ENCODE measurements at regions of chr11 and their contacts with region 1.

Region 1: DNA sequence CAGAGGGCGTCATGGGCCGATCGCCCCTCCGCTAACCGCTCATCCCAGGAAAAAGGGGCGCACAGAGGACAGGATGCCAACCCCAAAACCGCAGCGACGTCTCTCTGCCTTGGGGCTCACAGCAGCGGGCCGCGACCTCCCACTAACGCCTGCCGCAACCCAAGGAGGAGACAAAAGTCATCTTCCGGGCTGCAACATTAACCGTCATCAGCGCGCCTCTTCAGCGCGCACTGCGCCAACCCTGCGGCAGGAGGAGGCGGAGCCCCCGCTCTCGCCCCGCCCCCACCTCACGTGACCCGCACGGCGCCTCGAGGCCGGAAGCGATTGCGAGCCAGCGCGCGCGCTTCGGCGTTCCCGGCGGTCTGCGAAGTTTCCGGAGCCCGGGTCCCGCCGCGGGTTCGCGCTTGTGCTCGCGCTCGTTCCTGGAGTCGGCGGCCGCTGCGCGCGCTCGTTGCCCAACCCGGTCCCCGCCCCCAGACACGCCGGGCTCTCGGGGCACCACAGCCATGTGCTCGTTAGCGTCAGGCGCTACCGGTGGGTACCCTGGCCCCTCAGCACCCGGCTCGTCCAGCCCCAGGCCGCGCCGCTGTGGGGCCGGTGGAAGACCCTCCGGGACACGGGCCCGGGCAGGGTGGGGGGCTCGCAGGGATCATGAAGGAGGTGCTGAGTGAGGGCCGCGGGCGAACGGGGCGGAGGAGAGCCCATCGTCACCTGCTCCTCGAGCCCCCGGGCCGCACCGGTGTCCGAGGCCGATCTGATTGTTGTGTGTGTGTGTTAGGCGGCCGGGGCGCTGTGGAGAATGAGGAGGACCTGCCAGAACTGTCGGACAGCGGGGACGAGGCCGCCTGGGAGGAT is at the start of gene PRMT3:
- DNase-seq: peak; percentile 96 to 99 (median 97)
- ATAC-seq: peak; percentile 86
- H3K4me3 ChIP-seq: peak within 1 kb of the TSS; percentile 85 to 86
- H3K4me3 Mint-ChIP-seq: peak within 1 kb of the TSS; percentile 96
- H3K27ac ChIP-seq: peak within 1 kb of the TSS; percentile 92 to 94
- H3K27ac Mint-ChIP-seq: peak within 1 kb of the TSS; percentile 99
- H3K4me1 ChIP-seq: peaks cover 17% of the 10 kb centered on the region
- H3K4me1 Mint-ChIP-seq: peaks cover 35% of the 10 kb centered on the region
- H3K27me3 ChIP-seq: no peaks in the 10 kb centered on the region
- H3K27me3 Mint-ChIP-seq: no peaks in the 10 kb centered on the region
- CTCF ChIP-seq: peak; percentile 86
- total RNA-seq, gene PRMT3: 10.2 to 10.6 TPM

Region 2: DNA sequence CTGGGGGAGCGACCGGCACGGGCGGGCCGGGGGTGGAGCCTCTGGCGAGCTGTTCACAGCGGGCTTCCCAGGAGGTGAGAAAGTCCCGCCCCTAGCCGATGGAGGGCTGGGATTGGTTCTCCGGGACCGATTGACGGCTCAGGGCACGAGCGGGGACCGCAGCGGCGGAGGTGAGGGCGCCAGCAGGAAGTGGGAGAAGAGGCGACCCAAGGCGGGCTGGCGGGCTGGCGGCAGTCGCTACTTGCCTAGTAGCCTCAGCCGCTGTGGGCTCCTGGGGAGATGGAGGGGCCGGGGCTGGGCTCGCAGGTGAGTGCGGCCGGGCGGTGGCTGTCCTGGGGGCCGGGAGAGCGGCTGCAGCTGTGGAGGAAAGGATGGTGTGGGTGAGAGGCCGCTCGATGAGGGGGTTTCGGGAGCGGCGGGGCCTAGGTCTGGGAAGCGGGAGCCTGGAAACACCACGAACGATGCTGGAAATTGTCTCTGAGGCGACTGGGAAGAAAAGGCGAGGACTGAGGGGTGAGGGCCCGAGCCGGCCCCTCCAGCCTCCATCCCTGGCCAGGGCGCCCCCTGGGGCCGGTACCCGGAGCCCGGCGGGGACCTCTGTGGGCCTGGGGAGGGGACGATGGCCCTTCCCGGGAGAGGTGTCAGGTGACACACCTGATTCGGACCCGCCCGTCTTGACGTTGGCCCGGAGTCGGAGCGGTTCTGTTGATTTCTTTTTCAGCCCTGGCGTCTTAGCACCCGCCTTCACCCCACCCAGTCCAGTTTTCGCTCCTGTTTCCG is 1270.3 kb before region 1 on chr11 and contains the start of gene ZDHHC13:
- CTCF ChIA-PET with region 1: no interaction called
- POLR2A ChIA-PET with region 1: no interaction called
- intact Hi-C with region 1: loop called (anchors 2 to 10 kb)
- DNase-seq: peak; percentile 85 to 96 (median 93)
- ATAC-seq: peak; percentile 98
- H3K4me3 ChIP-seq: peak within 1 kb of the TSS; percentile 73 to 84
- H3K4me3 Mint-ChIP-seq: peak within 1 kb of the TSS; percentile 93
- H3K27ac ChIP-seq: peak within 1 kb of the TSS; percentile 48 to 62
- H3K27ac Mint-ChIP-seq: peak within 1 kb of the TSS; percentile 87
- H3K4me1 ChIP-seq: peaks cover 26% of the 10 kb centered on the region
- H3K4me1 Mint-ChIP-seq: peaks cover 50% of the 10 kb centered on the region
- H3K27me3 ChIP-seq: no peaks in the 10 kb centered on the region
- H3K27me3 Mint-ChIP-seq: no peaks in the 10 kb centered on the region
- CTCF ChIP-seq: no peak
- total RNA-seq, gene ZDHHC13: 3.1 to 3.5 TPM

Region 3: GRCh38 chr11:19712281-19713220 is 674.9 kb before region 1 on chr11 and contains the start of gene NAV2:
- CTCF ChIA-PET with region 1: no interaction called
- POLR2A ChIA-PET with region 1: no interaction called
- intact Hi-C with region 1: loop called in 1 of 2 experiments (anchors 5 kb)
- DNase-seq: peak; percentile 43 to 88 (median 68)
- ATAC-seq: peak; percentile 97
- H3K4me3 ChIP-seq: peak within 1 kb of the TSS; percentile 67 to 86
- H3K4me3 Mint-ChIP-seq: peak within 1 kb of the TSS; percentile 90
- H3K27ac ChIP-seq: peak within 1 kb of the TSS; percentile 43 to 61
- H3K27ac Mint-ChIP-seq: peak within 1 kb of the TSS; percentile 90
- H3K4me1 ChIP-seq: peaks cover 20% of the 10 kb centered on the region
- H3K4me1 Mint-ChIP-seq: peaks cover 26% of the 10 kb centered on the region
- H3K27me3 ChIP-seq: peaks cover 15 to 19% of the 10 kb centered on the region in 2 experiments
- H3K27me3 Mint-ChIP-seq: peaks cover 33% of the 10 kb centered on the region
- CTCF ChIP-seq: no peak
- total RNA-seq, gene NAV2: 0.39 to 1.3 TPM

Region 4: GRCh38 chr11:20363500-20364411 is 23.7 kb before region 1 on chr11 and contains the start of gene HTATIP2:
- CTCF ChIA-PET with region 1: interaction called, 9 read pairs
- POLR2A ChIA-PET with region 1: interaction called, 6 read pairs
- intact Hi-C with region 1: loop called in 1 of 2 experiments (anchors 1 kb)
- DNase-seq: peak; percentile 52 to 88 (median 74)
- ATAC-seq: peak; percentile 86
- H3K4me3 ChIP-seq: peak within 1 kb of the TSS; percentile 79 to 82
- H3K4me3 Mint-ChIP-seq: peak within 1 kb of the TSS; percentile 92
- H3K27ac ChIP-seq: peak within 1 kb of the TSS; percentile 68 to 69
- H3K27ac Mint-ChIP-seq: peak within 1 kb of the TSS; percentile 94
- H3K4me1 ChIP-seq: peaks cover 33% of the 10 kb centered on the region
- H3K4me1 Mint-ChIP-seq: peaks cover 66% of the 10 kb centered on the region
- H3K27me3 ChIP-seq: no peaks in the 10 kb centered on the region
- H3K27me3 Mint-ChIP-seq: no peaks in the 10 kb centered on the region
- CTCF ChIP-seq: no peak
- total RNA-seq, gene HTATIP2: 6.6 to 7.5 TPM

Region 5: DNA sequence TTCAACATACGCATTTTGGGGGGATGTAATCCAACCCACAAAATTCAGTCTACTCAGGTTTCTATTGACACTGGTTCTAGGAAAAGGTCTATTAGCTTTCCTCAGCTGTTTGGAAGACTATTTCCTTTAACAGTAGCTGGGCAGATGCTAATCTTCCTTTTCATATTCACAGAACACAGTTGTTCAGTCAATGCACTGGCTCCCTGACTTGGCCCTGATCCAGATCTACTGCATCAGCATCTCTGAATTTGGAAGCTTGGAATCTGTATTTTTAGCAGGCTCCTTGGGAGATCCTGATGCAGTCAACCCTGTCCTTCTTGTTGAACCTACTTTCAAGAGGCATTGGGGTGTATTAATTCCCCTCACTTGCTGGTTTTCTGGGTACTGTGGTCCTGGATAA is 17.7 kb before region 1 on chr11:
- CTCF ChIA-PET with region 1: interaction called, 6 read pairs
- POLR2A ChIA-PET with region 1: no interaction called
- intact Hi-C with region 1: loop called in 1 of 2 experiments (anchors 2 kb)
- DNase-seq: no peak
- ATAC-seq: no peak
- H3K4me3 ChIP-seq: no peak overlapping the region
- H3K4me3 Mint-ChIP-seq: no peak overlapping the region
- H3K27ac ChIP-seq: no peak overlapping the region
- H3K27ac Mint-ChIP-seq: no peak overlapping the region
- H3K4me1 ChIP-seq: no peaks in the 10 kb centered on the region
- H3K4me1 Mint-ChIP-seq: peaks cover 28% of the 10 kb centered on the region
- H3K27me3 ChIP-seq: no peaks in the 10 kb centered on the region
- H3K27me3 Mint-ChIP-seq: no peaks in the 10 kb centered on the region
- CTCF ChIP-seq: no peak

Region 6: DNA sequence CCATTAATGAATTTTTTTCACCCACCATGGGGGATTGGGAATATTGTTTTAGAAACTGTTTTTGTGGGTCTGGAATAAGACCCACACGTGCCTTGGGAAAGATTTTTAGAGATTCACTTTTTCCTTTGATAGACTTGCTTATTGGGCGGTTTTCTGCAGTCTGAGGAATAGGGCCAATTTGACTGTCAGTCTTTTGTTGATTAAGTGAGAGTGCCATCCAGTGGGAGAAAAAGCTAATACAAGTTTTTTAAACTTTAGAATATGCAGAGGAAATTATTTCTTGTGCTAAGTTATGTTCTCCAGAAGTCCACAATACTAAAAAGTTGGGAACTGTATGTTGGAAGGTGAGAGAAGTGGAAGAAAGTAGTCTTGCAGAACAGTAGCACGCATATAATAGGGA is 56.1 kb after region 1 on chr11:
- CTCF ChIA-PET with region 1: interaction called, 3 read pairs
- POLR2A ChIA-PET with region 1: no interaction called
- intact Hi-C with region 1: loop called in 1 of 2 experiments (anchors 5 kb)
- DNase-seq: peak in 2 of 9 experiments; percentile 4 to 22
- ATAC-seq: no peak
- H3K4me3 ChIP-seq: no peak overlapping the region
- H3K4me3 Mint-ChIP-seq: no peak overlapping the region
- H3K27ac ChIP-seq: no peak overlapping the region
- H3K27ac Mint-ChIP-seq: no peak overlapping the region
- H3K4me1 ChIP-seq: no peaks in the 10 kb centered on the region
- H3K4me1 Mint-ChIP-seq: no peaks in the 10 kb centered on the region
- H3K27me3 ChIP-seq: no peaks in the 10 kb centered on the region
- H3K27me3 Mint-ChIP-seq: no peaks in the 10 kb centered on the region
- CTCF ChIP-seq: peak; percentile 32

Region 7: DNA sequence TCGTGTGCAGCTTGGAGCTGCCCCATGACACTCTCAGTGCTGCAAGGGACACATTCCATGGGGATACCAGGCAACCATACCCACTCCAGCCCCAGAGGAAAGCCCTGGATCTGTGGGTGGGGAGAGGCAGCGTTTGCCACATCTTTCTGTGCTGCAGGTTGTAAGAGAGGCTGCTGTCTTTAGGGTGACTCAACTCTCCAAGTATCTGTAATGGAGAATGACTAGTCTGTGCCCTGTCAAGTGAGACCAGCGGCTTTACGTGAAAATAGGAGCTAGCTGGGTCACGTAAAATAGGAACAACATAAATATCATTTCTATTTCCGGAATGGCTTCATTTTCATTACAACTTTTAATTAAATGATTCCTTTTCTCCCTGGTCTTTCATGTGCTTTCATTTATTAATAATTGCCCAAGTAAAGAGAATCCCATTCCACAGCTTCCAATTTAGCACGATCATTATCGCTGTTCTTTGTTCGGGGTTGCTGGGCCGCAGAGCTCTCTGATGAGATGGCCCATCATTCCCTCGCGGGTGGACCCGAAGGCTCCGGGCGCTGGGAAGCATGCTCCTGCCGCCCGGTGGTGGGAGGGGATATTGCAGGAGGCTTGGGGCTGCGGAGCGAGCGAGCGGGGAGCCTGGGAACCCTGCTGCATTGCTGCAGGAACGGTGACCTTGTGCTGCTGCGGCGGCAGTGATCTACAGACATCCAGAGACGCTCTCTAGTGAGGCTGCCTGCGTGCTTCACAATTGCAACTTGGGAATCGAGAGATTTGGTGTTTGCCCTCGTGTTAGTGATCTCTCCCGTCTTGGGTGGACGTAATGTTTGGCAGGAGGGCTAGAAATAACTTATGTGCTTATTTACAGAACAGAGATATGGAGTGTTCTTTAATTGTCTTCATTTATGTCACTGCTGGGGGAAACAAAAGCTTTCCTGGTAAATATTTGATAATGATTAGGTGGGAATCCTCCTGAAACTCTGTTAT is 222.5 kb after region 1 on chr11:
- CTCF ChIA-PET with region 1: no interaction called
- POLR2A ChIA-PET with region 1: no interaction called
- intact Hi-C with region 1: loop called in 1 of 2 experiments (anchors 5 kb)
- DNase-seq: peak; percentile 17 to 65 (median 40)
- ATAC-seq: peak; percentile 59
- H3K4me3 ChIP-seq: no peak overlapping the region
- H3K4me3 Mint-ChIP-seq: peak overlapping the region; percentile 54
- H3K27ac ChIP-seq: no peak overlapping the region
- H3K27ac Mint-ChIP-seq: no peak overlapping the region
- H3K4me1 ChIP-seq: no peaks in the 10 kb centered on the region
- H3K4me1 Mint-ChIP-seq: peaks cover 7% of the 10 kb centered on the region
- H3K27me3 ChIP-seq: peaks cover 3 to 14% of the 10 kb centered on the region in 2 experiments
- H3K27me3 Mint-ChIP-seq: peaks cover 72% of the 10 kb centered on the region
- CTCF ChIP-seq: peak; percentile 64